PC-3 (cell line): ENCODE measurements at regions of chr1 and their contacts with region 1.

Region 1: DNA sequence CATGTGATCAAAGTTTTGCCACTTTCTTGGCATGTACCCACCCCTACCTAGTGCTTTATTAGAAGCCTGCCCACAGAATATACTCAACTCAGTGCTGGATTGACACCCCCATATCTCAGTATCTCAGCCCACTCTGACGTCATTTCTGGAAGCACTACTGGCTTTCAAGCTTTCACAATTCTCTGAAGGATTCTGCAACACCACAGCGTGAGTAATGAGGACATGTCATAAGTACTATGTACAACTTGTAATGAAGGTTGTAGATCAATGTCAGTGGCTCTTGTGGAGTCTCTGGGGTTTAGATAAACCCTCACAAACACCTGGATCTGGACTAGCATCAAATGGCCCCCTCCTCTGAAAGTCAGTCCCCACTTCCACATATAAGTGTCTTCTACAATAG is 57.2 kb downstream of the TNFSF4 start:
- DNase-seq: peak; percentile 47
- ATAC-seq: no peak
- H3K4me3 ChIP-seq: no peak overlapping the region
- H3K27ac ChIP-seq: no peak overlapping the region
- H3K4me1 ChIP-seq: 0 out of 2 replicates have a peak, but pooled peaks cover 6% of the 10 kb centered on the region
- H3K27me3 ChIP-seq: no peaks in the 10 kb centered on the region
- CTCF ChIP-seq: no peak

Region 2: DNA sequence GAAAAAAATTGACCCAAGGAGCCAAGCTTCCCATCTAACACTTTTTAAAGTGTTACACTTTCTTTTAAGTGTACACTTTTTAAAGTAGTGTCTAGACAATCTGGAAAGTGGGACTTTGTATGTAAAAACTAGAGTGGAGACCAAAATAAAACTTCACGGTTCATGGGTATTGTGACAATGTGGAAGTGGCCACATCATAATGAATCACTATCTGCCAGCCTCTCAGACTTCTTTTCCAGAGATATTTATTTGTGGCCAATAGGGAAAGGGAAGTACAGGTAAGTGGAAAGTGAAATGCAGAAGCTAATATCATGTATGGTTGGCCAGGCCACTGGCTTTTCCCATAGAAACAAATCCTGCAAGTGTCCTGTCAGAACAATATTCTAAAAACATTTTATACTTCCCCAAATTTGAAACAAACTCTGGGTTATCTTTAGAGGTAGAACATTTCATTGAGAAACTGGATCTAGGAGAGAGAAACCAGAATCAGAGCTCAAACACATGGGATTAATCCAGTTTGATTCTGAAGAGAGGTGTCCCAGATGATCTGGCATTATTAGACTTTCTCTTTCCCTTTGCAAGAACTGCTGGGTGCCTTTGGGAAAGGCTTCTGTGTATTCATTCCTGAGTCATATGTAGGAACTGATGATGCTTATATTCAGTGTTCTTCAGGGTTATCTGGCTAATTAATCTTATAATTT is 101.1 kb before region 1 on chr1:
- CTCF ChIA-PET with region 1: interaction called, 10 read pairs
- POLR2A ChIA-PET with region 1: no interaction called
- intact Hi-C with region 1: no loop called
- DNase-seq: peak; percentile 98
- ATAC-seq: peak; percentile 85
- H3K4me3 ChIP-seq: no peak overlapping the region
- H3K27ac ChIP-seq: peak overlapping the region; percentile 51
- H3K4me1 ChIP-seq: peaks cover 55% of the 10 kb centered on the region
- H3K27me3 ChIP-seq: no peaks in the 10 kb centered on the region
- CTCF ChIP-seq: no peak